Activated naive CD4-positive, alpha-beta T cell treated with anti-CD3 and anti-CD28 coated beads for 36 hours (primary cell): ENCODE measurements at regions of chr19 and their contacts with region 1.

Region 1: GRCh38 chr19:34345947-34346351 is 19.0 kb upstream of the GPI start:
- DNase-seq: peak; percentile 82
- H3K4me3 Mint-ChIP-seq: no peak overlapping the region
- H3K27ac Mint-ChIP-seq: no peak overlapping the region
- H3K4me1 Mint-ChIP-seq: peaks cover 17% of the 10 kb centered on the region
- H3K27me3 Mint-ChIP-seq: no peaks in the 10 kb centered on the region

Region 2: DNA sequence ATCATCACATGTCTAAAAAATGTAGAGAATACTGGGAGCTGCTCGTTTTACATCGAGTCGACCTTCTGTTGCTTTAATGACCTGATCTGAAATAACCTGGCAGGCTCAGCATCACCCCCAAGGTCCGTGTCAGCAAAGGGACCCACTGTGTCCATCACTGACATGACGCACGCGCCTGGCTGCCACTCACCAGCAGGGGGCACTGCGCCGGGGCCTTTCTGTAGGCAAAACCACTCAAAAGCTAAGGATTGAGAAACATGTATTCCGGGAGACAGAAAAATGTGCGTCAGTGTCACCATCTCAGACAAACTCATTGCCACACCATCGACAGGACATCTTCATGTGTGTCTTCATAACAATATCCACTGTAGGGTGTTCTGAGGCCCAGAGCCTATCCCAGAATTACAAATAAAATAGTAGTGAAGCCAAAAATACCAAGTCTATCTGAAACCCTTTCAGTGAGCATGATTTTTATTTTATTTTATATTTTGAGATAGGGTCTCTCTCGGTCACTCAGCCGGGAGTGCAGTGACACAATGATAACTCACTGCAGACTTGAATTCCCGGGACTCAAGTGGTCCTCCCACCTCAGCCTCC is 303.9 kb before region 1 on chr19:
- CTCF ChIA-PET with region 1: interaction called, 5 read pairs
- intact Hi-C with region 1: loop called (anchors 5 kb)
- DNase-seq: peak; percentile 90
- H3K4me3 Mint-ChIP-seq: no peak overlapping the region
- H3K27ac Mint-ChIP-seq: no peak overlapping the region
- H3K4me1 Mint-ChIP-seq: peaks cover 2% of the 10 kb centered on the region
- H3K27me3 Mint-ChIP-seq: peaks cover 5% of the 10 kb centered on the region

Region 3: GRCh38 chr19:34120846-34121639 is 224.9 kb before region 1 on chr19:
- CTCF ChIA-PET with region 1: no interaction called
- intact Hi-C with region 1: loop called (anchors 2 kb)
- DNase-seq: peak; percentile 77
- H3K4me3 Mint-ChIP-seq: no peak overlapping the region
- H3K27ac Mint-ChIP-seq: no peak overlapping the region
- H3K4me1 Mint-ChIP-seq: peaks cover 27% of the 10 kb centered on the region
- H3K27me3 Mint-ChIP-seq: no peaks in the 10 kb centered on the region

Region 4: DNA sequence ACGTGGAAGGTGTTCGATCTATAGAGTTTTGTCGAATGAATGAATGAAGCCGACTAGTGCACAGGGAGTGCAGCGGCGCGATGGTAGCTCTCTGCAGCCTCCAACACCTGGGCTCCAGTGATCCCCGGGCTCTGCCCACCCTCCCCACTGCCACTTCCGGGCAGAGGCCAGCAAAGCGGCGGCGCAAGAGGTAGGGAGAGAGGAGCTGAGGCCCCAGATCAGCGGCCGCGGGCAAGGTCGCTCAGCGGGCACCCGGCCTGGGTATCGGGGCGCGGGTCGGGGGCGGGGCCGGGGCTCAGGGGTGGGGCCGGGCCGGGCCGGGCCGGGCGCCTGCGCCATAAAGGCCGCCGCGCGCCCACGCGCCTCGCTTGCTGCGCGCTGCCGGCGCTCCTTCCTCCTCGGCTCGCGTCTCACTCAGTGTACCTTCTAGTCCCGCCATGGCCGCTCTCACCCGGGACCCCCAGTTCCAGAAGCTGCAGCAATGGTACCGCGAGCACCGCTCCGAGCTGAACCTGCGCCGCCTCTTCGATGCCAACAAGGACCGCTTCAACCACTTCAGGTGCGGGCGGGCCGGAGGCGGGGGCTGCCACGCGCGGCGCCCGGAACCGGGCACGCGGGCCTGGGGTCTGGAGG is 19.0 kb after region 1 on chr19 and contains the start of gene GPI:
- CTCF ChIA-PET with region 1: interaction called, 10 read pairs
- intact Hi-C with region 1: no loop called
- DNase-seq: peak; percentile 67
- H3K4me3 Mint-ChIP-seq: peak within 1 kb of the TSS; percentile 94
- H3K27ac Mint-ChIP-seq: peak within 1 kb of the TSS; percentile 74
- H3K4me1 Mint-ChIP-seq: peaks cover 47% of the 10 kb centered on the region
- H3K27me3 Mint-ChIP-seq: no peaks in the 10 kb centered on the region
- total RNA-seq, gene GPI: 542 to 553 TPM

Region 5: DNA sequence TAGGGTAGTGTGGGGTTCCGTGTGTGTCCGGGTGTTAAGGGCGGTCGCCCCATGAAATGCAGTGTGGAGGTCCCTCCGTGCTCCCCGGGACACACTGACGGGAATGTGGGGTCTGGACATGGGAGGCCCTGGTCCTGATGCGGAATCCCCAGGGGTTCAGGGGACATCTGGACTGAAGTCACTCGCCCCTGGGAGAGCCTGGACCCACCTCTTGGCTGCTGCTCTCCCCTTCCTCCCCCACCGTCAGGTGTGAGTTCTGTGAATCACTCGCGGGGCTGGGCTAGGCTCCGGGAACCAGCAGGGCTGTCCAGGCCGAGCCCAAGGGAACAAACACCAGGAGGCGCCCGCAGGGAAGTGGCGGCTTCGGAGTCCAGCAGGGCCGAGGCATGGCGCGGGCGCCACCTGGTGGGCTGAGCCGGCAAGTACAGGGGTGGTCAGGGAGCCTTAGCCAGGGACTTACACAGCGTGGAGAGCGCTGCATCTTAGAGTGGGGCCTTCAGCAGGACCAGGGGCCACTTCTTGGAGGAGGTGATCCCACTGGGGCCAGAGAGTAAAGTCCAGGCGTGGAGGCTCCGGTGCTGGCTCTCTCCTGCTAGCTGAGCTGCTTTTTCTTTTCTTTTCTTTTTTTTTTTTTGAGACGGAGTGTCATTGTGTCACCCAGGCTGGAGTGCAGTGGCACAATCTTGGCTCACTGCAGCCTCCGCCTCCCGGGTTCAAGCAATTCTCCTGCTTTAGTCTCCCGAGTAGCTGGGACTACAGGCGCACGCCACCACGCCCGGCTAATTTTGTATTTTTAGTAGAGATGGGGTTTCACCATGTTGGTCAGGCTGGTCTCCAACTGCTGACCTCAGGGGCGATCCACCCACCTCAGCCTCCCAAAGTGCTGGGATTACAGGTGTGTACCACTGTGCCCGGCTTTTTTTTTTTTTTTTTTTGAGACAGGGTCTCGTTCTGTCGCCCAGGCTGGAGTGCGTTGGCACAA is 155.7 kb after region 1 on chr19:
- CTCF ChIA-PET with region 1: no interaction called
- intact Hi-C with region 1: no loop called
- DNase-seq: peak; percentile 94
- H3K4me3 Mint-ChIP-seq: no peak overlapping the region
- H3K27ac Mint-ChIP-seq: no peak overlapping the region
- H3K4me1 Mint-ChIP-seq: peaks cover 9% of the 10 kb centered on the region
- H3K27me3 Mint-ChIP-seq: peaks cover 20% of the 10 kb centered on the region